H1 (cell line): ENCODE measurements at regions of chr14 and their contacts with region 1.

Region 1: GRCh38 chr14:23320774-23321571 is at the start of gene PABPN1:
- DNase-seq: peak; percentile 94 to 99
- H3K4me3 ChIP-seq: peak within 1 kb of the TSS; percentile 96 to 100 (median 99)
- H3K27ac ChIP-seq: peak within 1 kb of the TSS; percentile 92
- H3K4me1 ChIP-seq: peaks cover 0 to 6% (median 2%) of the 10 kb centered on the region in 4 experiments; a peak in 6 of 7 replicates
- H3K27me3 ChIP-seq: no peaks in the 10 kb centered on the region
- CTCF ChIP-seq: no peak
- EP300 ChIP-seq: no peak
- POLR2A ChIP-seq: peak; percentile 81 to 94
- RAD21 ChIP-seq: no peak
- total RNA-seq, gene PABPN1: 300 and 312 TPM in 2 replicates

Region 2: GRCh38 chr14:23301288-23301968 is 19.5 kb before region 1 on chr14:
- CTCF ChIA-PET with region 1: interaction called, 28 read pairs
- POLR2A ChIA-PET with region 1: interaction called, 48 read pairs
- DNase-seq: peak; percentile 95 to 96
- H3K4me3 ChIP-seq: peak overlapping the region; percentile 56 to 93 (median 73)
- H3K27ac ChIP-seq: peak overlapping the region; percentile 65; the same call in 1 of the 2 replicates
- H3K4me1 ChIP-seq: peaks cover 0 to 7% (median 1%) of the 10 kb centered on the region in 4 experiments; a peak in 4 of 7 replicates
- H3K27me3 ChIP-seq: peaks cover 8 to 43% (median 34%) of the 10 kb centered on the region in 4 experiments
- CTCF ChIP-seq: peak; percentile 71 to 93 (median 80)
- EP300 ChIP-seq: peak in 1 of 2 experiments; percentile 33; a peak in 1 of 3 replicates
- POLR2A ChIP-seq: no peak
- RAD21 ChIP-seq: peak; percentile 6 to 46; a peak in 3 of 4 replicates

Region 3: GRCh38 chr14:23335623-23336022 is 14.7 kb after region 1 on chr14:
- CTCF ChIA-PET with region 1: interaction called, 4 read pairs
- POLR2A ChIA-PET with region 1: interaction called, 25 read pairs
- DNase-seq: no peak
- H3K4me3 ChIP-seq: no peak overlapping the region
- H3K27ac ChIP-seq: no peak overlapping the region
- H3K4me1 ChIP-seq: no peaks in the 10 kb centered on the region
- H3K27me3 ChIP-seq: no peaks in the 10 kb centered on the region
- CTCF ChIP-seq: no peak
- EP300 ChIP-seq: no peak
- POLR2A ChIP-seq: no peak
- RAD21 ChIP-seq: no peak

Region 4: GRCh38 chr14:23352511-23353432 is 31.8 kb after region 1 on chr14 and contains the start of gene SLC22A17:
- CTCF ChIA-PET with region 1: interaction called, 31 read pairs
- POLR2A ChIA-PET with region 1: interaction called, 25 read pairs
- DNase-seq: peak in 1 of 2 experiments; percentile 86
- H3K4me3 ChIP-seq: peak within 1 kb of the TSS; percentile 37 to 84 (median 73)
- H3K27ac ChIP-seq: 0 out of 2 replicates have a peak within 1 kb of the TSS, but pooled peaks have one; percentile 8
- H3K4me1 ChIP-seq: peaks cover 0 to 3% (median 2%) of the 10 kb centered on the region in 4 experiments; a peak in 4 of 7 replicates
- H3K27me3 ChIP-seq: peaks cover 0 to 14% (median 10%) of the 10 kb centered on the region in 4 experiments; a peak in 6 of 7 replicates
- CTCF ChIP-seq: peak in 2 of 3 experiments; percentile 11 to 22; a peak in 2 of 4 replicates
- EP300 ChIP-seq: no peak
- POLR2A ChIP-seq: peak; percentile 36 to 91
- RAD21 ChIP-seq: peak in 1 of 2 experiments; percentile 16; a peak in 1 of 4 replicates
- total RNA-seq, gene SLC22A17: 39.4 and 43.0 TPM in 2 replicates

Region 5: DNA sequence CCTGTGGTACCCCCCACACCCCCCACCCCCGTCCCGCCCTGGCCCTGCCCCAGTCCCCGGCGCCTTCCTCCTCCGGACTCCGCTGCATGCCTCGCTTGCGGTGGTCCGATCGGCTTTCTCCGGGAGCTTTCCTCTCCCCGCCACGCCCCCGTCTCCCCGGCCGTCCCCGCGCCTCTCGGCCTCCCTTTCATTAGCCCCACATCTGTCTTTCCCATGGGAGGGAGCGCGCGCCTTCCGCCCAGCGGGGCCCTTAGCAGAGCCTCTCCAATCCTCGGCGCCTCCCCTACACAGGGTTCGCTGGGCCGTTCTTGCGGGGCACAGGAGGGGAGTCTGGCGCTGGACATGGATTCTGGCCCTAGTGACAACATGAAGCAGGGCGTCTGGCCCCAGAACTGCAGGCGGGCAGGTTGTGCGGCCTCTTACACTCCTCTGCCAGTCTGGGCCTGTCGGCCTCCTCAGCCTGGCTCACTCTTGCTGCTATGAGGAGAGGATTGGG is 45.5 kb after region 1 on chr14:
- CTCF ChIA-PET with region 1: interaction called, 78 read pairs
- POLR2A ChIA-PET with region 1: interaction called, 37 read pairs
- DNase-seq: peak in 1 of 2 experiments; percentile 92
- H3K4me3 ChIP-seq: peak overlapping the region; percentile 47 to 79 (median 77)
- H3K27ac ChIP-seq: peak overlapping the region; percentile 65; the same call in 1 of the 2 replicates
- H3K4me1 ChIP-seq: peaks cover 2 to 22% (median 14%) of the 10 kb centered on the region in 4 experiments; a peak in 6 of 7 replicates
- H3K27me3 ChIP-seq: peaks cover 0 to 12% (median 10%) of the 10 kb centered on the region in 4 experiments; a peak in 5 of 7 replicates
- CTCF ChIP-seq: no peak
- EP300 ChIP-seq: no peak
- POLR2A ChIP-seq: no peak
- RAD21 ChIP-seq: no peak